ENCODE measurements at regions of chr7 and their contacts with region 1.

Region 1: GRCh38 chr7:102279537-102280400 is 6.9 kb upstream of the SH2B2 start:
- DNase-seq: peak; percentile 75
- ATAC-seq: peak; percentile 83
- H3K4me3 ChIP-seq: no peak overlapping the region
- H3K27ac ChIP-seq: no peak overlapping the region
- H3K4me1 ChIP-seq: peaks cover 8% of the 10 kb centered on the region
- H3K27me3 ChIP-seq: no peaks in the 10 kb centered on the region
- CTCF ChIP-seq: peak; percentile 81

Region 2: DNA sequence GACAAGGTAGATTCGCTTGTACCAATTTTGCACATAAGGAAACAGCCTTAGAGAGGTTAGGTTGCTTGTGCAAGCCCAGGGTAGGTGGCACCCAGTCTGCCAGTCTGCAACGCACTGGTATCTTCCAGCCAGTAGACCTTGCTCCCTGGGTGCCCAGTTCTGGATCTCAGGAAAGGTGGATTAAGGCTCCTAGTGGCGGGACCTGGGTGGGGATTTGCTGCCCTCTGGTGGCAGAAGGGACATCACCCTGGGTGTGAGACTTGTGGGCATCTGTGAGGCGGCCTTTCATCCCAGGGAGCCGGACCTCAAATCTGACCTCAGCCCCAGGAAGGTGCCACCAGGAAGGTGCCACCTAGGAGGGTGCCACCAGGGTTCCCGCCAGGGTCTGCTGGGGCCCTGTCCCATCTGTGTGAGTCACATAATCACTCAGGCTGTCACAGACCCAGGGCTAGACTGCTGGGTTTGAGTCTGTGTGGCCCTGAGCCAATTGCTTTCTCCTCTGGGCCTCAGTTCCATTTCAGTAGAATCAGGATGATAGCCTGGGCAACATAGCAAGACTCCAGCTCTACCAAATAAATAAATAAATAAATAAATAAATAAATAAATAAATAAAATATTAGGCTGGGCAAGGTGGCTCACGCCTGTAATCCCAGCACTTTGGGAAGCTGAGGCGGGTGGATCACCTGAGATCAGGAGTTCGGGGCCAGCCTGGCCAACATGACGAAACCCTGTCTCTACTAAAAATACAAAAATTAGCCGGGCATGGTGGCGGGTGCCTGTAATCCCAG is 111.1 kb after region 1 on chr7:
- intact Hi-C with region 1: loop called (anchors 5 kb)
- DNase-seq: peak; percentile 87
- ATAC-seq: peak; percentile 97
- H3K4me3 ChIP-seq: no peak overlapping the region
- H3K27ac ChIP-seq: no peak overlapping the region
- H3K4me1 ChIP-seq: no peaks in the 10 kb centered on the region
- H3K27me3 ChIP-seq: no peaks in the 10 kb centered on the region
- CTCF ChIP-seq: peak; percentile 93